Mammary epithelial cell (primary cell): ENCODE measurements at regions of chr19 and their contacts with region 1.

Region 1: DNA sequence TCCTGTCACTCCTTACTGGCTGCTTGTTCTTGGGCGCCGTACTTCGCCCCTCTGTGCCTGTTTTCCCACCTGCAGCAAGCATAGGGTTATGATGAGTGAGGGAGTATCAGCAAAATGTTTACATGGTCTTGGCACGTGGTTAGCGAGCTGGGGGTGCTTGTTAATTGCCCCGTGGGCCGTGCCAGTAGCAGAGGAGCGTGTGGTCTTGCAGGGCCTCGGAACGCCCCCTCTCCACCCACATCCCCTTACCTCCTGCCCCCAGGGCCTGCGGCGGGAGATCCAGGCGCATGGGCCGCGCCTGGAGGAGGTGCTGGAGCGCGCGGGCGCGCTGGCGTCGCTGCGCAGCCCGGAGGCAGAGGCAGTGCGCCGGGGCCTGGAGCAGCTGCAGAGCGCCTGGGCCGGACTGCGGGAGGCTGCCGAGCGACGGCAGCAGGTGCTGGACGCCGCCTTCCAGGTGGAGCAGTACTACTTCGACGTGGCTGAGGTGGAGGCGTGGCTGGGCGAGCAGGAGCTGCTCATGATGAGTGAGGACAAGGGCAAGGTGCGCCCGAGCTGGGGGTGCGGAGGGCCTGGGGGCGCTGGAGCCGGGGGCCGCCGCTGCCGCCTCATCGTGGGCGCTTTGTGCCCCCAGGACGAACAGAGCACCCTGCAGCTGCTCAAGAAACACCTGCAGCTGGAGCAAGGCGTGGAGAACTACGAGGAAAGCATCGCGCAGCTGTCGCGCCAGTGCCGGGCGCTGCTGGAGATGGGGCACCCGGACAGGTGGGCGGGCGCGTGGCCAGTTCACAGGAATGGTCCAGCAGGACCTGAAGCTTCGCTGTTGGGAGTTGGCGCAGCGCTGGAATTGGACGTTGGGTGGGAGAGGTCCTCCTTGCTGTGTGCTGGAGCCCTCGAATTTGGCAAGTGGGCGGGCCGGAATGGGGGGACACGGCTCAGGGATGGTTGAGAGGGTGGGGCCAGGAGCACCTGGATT is 22.5 kb upstream of the SHKBP1 start:
- DNase-seq: peak; percentile 12
- H3K4me3 ChIP-seq: no peak overlapping the region
- H3K27ac ChIP-seq: no peak overlapping the region
- H3K4me1 ChIP-seq: no peaks in the 10 kb centered on the region
- H3K27me3 ChIP-seq: peaks cover 2% of the 10 kb centered on the region
- CTCF ChIP-seq: no peak

Region 2: DNA sequence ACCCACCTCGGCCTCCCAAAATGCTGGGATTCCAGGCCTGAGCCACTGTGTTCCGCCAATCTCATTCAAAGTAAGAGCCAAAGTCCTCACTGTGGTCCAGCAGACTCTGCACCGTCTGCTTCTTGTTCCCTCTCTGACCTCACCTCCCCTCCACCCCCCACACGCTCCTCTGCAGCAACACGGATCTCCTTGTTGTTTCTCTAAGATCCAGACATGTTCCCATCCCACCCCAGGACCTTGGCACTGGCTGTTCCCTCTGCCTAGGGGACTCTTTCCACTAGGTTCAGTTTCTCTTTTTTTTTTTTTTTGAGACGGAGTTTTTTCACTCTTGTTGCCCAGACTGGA is 85.4 kb after region 1 on chr19:
- CTCF ChIA-PET with region 1: interaction called, 4 read pairs
- dilution Hi-C with region 1: loop called (anchors 5 kb)
- in situ Hi-C with region 1: no loop called
- intact Hi-C with region 1: no loop called
- DNase-seq: no peak
- H3K4me3 ChIP-seq: no peak overlapping the region
- H3K27ac ChIP-seq: no peak overlapping the region
- H3K4me1 ChIP-seq: no peaks in the 10 kb centered on the region
- H3K27me3 ChIP-seq: no peaks in the 10 kb centered on the region
- CTCF ChIP-seq: no peak

Region 3: DNA sequence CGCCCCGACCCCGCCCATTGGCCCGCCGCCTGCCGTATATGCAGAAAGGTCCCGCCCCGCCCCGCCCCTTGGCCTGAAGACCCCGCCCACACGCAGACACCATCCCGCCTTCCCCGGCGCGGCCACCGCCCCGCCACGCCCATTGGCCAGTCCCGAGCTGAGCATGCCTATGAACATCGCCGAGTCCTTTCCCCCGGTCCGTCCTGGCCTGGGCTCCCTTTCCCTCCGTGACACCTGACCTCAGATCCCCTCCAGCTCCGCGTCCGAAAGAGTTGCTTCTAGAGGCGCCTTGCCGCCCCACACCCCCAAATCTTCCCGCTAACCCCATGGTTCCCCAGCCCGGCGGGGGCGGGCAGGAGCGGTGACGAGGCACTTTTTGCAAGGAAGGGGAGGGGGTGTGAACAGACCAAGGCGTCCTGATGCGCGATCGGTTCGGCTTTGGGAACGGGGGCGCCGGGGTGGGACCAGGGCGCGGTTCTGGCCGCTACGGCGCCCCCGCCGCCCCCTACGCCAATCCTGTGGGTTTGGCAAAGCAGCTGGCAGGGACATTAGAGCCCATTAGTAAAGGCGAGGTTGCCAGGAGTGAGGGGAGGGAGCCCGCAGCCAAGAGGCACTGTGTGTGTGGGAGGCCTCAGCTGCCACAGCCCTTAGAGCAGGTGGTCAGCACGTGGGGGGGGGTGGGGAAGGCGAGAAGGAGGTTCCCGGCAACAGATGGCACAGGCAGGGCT is 136.7 kb after region 1 on chr19:
- CTCF ChIA-PET with region 1: no interaction called
- dilution Hi-C with region 1: loop called (anchors 10 kb)
- in situ Hi-C with region 1: no loop called
- intact Hi-C with region 1: no loop called
- DNase-seq: peak; percentile 86
- H3K4me3 ChIP-seq: peak overlapping the region; percentile 29 to 61 (median 39)
- H3K27ac ChIP-seq: peak overlapping the region; percentile 50
- H3K4me1 ChIP-seq: peaks cover 18% of the 10 kb centered on the region
- H3K27me3 ChIP-seq: no peaks in the 10 kb centered on the region
- CTCF ChIP-seq: no peak

Region 4: GRCh38 chr19:40813182-40813958 is 259.2 kb after region 1 on chr19:
- CTCF ChIA-PET with region 1: no interaction called
- dilution Hi-C with region 1: no loop called
- in situ Hi-C with region 1: no loop called
- intact Hi-C with region 1: no loop called
- DNase-seq: no peak
- H3K4me3 ChIP-seq: no peak overlapping the region
- H3K27ac ChIP-seq: no peak overlapping the region
- H3K4me1 ChIP-seq: peaks cover 18% of the 10 kb centered on the region
- H3K27me3 ChIP-seq: no peaks in the 10 kb centered on the region
- CTCF ChIP-seq: no peak